Breast epithelium (tissue), 4 donors: ENCODE measurements at regions of chr16 and their contacts with region 1.

Region 1: DNA sequence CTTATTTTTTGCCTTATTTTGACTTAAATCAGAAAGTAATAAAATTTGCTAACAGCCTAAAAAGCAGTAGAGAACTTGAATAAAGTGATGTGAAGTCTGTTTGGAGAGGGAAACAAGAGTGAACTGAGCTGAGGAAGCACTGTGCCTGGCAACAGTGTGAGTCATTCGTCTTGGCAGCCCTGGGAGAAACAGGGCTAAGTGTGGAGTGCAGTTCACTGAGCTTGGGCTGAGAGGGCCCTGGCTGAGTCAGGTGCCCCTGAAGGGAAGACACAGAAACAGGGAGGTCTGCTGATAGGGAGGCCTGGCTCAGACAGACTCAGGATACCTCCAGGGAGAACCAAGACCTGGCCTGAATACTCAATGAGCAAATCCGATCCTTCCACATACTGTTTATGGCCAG is 132.1 kb downstream of the HS3ST4 start:
- DNase-seq: no peak
- H3K4me3 ChIP-seq: no peak overlapping the region
- H3K27ac ChIP-seq: no peak overlapping the region
- H3K4me1 ChIP-seq: no peaks in the 10 kb centered on the region
- H3K27me3 ChIP-seq: no peaks in the 10 kb centered on the region
- CTCF ChIP-seq: no peak
- POLR2A ChIP-seq: no peak

Region 2: GRCh38 chr16:25216785-25217526 is 606.9 kb before region 1 on chr16 and contains the start of gene AQP8:
- intact Hi-C with region 1: loop called (anchors 5 kb)
- DNase-seq: no peak
- H3K4me3 ChIP-seq: no peak within 1 kb of the TSS
- H3K27ac ChIP-seq: no peak within 1 kb of the TSS
- H3K4me1 ChIP-seq: no peaks in the 10 kb centered on the region
- H3K27me3 ChIP-seq: no peaks in the 10 kb centered on the region
- CTCF ChIP-seq: no peak
- POLR2A ChIP-seq: no peak
- total RNA-seq, gene AQP8: 2.9 TPM in 1 of 3 donors, not detected in the others

Region 3: GRCh38 chr16:25729188-25729915 is 94.5 kb before region 1 on chr16:
- intact Hi-C with region 1: no loop called
- DNase-seq: no peak
- H3K4me3 ChIP-seq: no peak overlapping the region
- H3K27ac ChIP-seq: no peak overlapping the region
- H3K4me1 ChIP-seq: no peaks in the 10 kb centered on the region
- H3K27me3 ChIP-seq: no peaks in the 10 kb centered on the region
- CTCF ChIP-seq: no peak
- POLR2A ChIP-seq: no peak

Region 4: GRCh38 chr16:25838724-25839186 is 14.9 kb after region 1 on chr16:
- intact Hi-C with region 1: no loop called
- DNase-seq: no peak
- H3K4me3 ChIP-seq: peak overlapping the region in 1 of 3 donors; percentile 3
- H3K27ac ChIP-seq: no peak overlapping the region
- H3K4me1 ChIP-seq: peaks cover 0 to 3% of the 10 kb centered on the region in 2 donors
- H3K27me3 ChIP-seq: no peaks in the 10 kb centered on the region
- CTCF ChIP-seq: peak; percentile 41 to 65 (median 53)
- POLR2A ChIP-seq: no peak

Region 5: GRCh38 chr16:25855818-25856217 is 31.9 kb after region 1 on chr16:
- intact Hi-C with region 1: no loop called
- DNase-seq: no peak
- H3K4me3 ChIP-seq: no peak overlapping the region
- H3K27ac ChIP-seq: no peak overlapping the region
- H3K4me1 ChIP-seq: no peaks in the 10 kb centered on the region
- H3K27me3 ChIP-seq: peaks cover 0 to 4% of the 10 kb centered on the region in 2 donors
- CTCF ChIP-seq: no peak
- POLR2A ChIP-seq: no peak

Region 6: GRCh38 chr16:25922438-25922837 is 98.5 kb after region 1 on chr16:
- intact Hi-C with region 1: no loop called
- DNase-seq: no peak
- H3K4me3 ChIP-seq: no peak overlapping the region
- H3K27ac ChIP-seq: no peak overlapping the region
- H3K4me1 ChIP-seq: no peaks in the 10 kb centered on the region
- H3K27me3 ChIP-seq: no peaks in the 10 kb centered on the region
- CTCF ChIP-seq: no peak
- POLR2A ChIP-seq: no peak